ENCODE measurements at regions of chr6 and their contacts with region 1.

Region 1: GRCh38 chr6:113858480-113859348 is 1.6 kb downstream of the MARCKS start:
- DNase-seq: peak; percentile 85 to 91
- ATAC-seq: peak; percentile 84 to 98 (median 87)
- H3K4me3 ChIP-seq: peak overlapping the region; percentile 70 to 93 (median 76)
- H3K27ac ChIP-seq: peak overlapping the region; percentile 92 to 99 (median 94)
- H3K4me1 ChIP-seq: peaks cover 0 to 55% (median 34%) of the 10 kb centered on the region in 9 donors
- H3K27me3 ChIP-seq: peaks cover 0 to 9% (median 0%) of the 10 kb centered on the region in 7 donors
- CTCF ChIP-seq: peak; percentile 91 to 99 (median 98)

Region 2: DNA sequence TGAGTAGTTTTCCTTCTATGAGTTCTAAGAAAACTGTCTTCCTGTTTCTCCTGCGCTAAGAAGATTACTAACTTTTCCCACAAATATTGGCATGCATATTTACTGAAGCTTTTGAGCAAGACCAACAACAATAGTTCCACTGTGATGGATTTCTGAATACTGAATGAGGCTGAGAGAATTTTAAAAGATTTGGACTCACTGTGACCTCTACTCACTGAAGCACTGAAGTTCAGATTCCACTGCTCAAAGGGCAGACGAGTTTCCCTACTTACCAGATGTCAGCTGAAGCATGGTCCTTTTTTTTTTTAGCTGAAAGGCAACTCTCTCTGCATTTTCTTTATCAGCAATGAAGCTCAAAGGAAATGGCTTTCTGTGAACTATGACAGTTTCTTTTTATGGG is 793.1 kb before region 1 on chr6:
- intact Hi-C with region 1: loop called in 2 of 10 experiments (anchors 5 kb)
- DNase-seq: peak in 1 of 2 donors; percentile 26
- ATAC-seq: peak in 7 of 8 donors; percentile 51 to 95 (median 79)
- H3K4me3 ChIP-seq: no peak overlapping the region
- H3K27ac ChIP-seq: peak overlapping the region in 6 of 10 donors; percentile 10 to 63 (median 18)
- H3K4me1 ChIP-seq: peaks cover 0 to 32% (median 12%) of the 10 kb centered on the region in 9 donors
- H3K27me3 ChIP-seq: no peaks in the 10 kb centered on the region
- CTCF ChIP-seq: no peak

Region 3: DNA sequence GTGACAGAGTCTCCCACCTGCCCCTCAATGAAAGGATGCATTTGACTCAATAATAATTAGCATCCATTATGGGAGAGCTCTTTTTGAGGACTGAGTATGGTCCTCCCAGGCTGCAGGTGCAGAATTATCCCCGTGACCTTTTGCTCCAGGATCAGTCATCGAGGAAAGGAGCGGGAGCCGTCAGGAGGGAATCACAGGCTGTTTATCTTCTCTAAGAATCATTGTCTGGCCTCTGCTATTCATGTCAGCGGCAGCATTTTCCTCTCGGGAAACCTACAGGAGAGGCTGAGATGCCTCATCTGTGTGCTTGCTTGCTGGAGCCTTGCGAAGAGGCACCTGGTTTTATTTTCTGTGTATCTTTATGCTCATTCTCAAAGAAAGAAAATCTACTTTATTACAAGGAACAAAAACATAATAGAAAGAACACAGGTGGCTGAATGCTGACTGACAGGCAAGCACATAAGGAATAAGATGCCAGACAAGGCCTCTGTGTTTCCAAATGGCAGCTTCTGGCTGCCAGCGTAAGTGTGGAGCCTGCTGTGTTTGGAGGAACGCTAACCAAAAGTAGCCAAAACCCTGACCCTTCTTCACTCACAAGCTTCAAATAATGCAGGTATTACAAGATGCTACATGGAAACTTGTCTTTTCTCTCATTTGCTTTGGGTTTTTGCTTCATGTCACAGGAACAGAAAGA is 540.7 kb before region 1 on chr6:
- intact Hi-C with region 1: loop called in 2 of 10 experiments (anchors 10 kb)
- DNase-seq: no peak
- ATAC-seq: no peak
- H3K4me3 ChIP-seq: no peak overlapping the region
- H3K27ac ChIP-seq: no peak overlapping the region
- H3K4me1 ChIP-seq: peaks cover 0 to 12% (median 5%) of the 10 kb centered on the region in 9 donors
- H3K27me3 ChIP-seq: no peaks in the 10 kb centered on the region
- CTCF ChIP-seq: no peak

Region 4: GRCh38 chr6:113414511-113414910 is 444.2 kb before region 1 on chr6:
- intact Hi-C with region 1: loop called in 7 of 10 experiments (anchors 2 to 10 kb)
- DNase-seq: peak in 1 of 2 donors; percentile 43
- ATAC-seq: peak in 7 of 8 donors; percentile 52 to 87 (median 84)
- H3K4me3 ChIP-seq: no peak overlapping the region
- H3K27ac ChIP-seq: no peak overlapping the region
- H3K4me1 ChIP-seq: peaks cover 0 to 20% (median 6%) of the 10 kb centered on the region in 9 donors
- H3K27me3 ChIP-seq: no peaks in the 10 kb centered on the region
- CTCF ChIP-seq: peak; percentile 13 to 71 (median 55)

Region 5: DNA sequence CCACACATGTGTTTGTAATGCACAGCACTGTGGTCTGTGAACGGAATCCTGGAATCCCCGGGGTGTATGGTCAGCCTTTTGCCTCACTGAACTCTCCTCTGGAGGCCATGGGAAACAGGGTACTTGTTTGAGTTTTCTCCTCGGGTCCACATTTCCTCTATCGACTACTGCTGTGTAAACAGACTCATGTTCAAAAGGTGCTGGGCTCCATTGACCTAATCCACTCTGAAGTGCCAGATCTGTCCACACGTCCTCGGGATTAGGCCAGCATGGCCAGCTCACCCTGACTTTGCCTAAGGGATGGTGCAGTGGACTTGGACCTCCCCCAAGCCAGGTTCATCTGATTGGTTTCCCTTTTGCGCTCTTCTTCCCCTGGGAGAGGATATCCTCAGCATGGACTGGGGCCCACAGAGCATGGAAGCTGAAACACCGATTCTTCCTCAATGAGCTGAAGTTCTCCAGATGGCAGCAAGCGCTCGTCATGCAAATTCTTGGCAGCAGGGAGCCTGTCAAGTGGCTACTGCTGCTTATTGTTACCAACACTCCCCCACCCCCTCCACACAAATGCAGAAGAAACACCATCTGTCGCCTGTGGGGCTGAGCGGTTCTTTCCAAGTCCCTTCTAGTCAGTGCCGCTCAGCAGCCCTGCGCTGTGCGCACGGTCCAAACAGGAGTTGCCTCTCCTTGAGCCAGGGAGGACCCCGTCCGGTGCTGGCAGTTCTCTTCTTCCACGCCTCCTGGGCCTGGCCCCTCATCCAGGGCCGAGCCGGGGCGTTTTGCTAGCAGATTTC is 294.1 kb before region 1 on chr6:
- intact Hi-C with region 1: loop called (anchors 2 to 10 kb)
- DNase-seq: peak; percentile 80 to 93
- ATAC-seq: peak; percentile 98 to 100 (median 98)
- H3K4me3 ChIP-seq: peak overlapping the region in 9 of 10 donors; percentile 13 to 48 (median 36)
- H3K27ac ChIP-seq: peak overlapping the region; percentile 16 to 86 (median 77)
- H3K4me1 ChIP-seq: peaks cover 4 to 18% (median 14%) of the 10 kb centered on the region in 9 donors
- H3K27me3 ChIP-seq: no peaks in the 10 kb centered on the region
- CTCF ChIP-seq: peak in 7 of 9 donors; percentile 12 to 46 (median 29)

Region 6: GRCh38 chr6:113671421-113671820 is 187.3 kb before region 1 on chr6:
- intact Hi-C with region 1: loop called in 2 of 10 experiments (anchors 2 to 10 kb)
- DNase-seq: no peak
- ATAC-seq: no peak
- H3K4me3 ChIP-seq: no peak overlapping the region
- H3K27ac ChIP-seq: peak overlapping the region in 1 of 10 donors; percentile 73
- H3K4me1 ChIP-seq: peaks cover 0 to 42% (median 38%) of the 10 kb centered on the region in 9 donors
- H3K27me3 ChIP-seq: no peaks in the 10 kb centered on the region
- CTCF ChIP-seq: no peak

Region 7: DNA sequence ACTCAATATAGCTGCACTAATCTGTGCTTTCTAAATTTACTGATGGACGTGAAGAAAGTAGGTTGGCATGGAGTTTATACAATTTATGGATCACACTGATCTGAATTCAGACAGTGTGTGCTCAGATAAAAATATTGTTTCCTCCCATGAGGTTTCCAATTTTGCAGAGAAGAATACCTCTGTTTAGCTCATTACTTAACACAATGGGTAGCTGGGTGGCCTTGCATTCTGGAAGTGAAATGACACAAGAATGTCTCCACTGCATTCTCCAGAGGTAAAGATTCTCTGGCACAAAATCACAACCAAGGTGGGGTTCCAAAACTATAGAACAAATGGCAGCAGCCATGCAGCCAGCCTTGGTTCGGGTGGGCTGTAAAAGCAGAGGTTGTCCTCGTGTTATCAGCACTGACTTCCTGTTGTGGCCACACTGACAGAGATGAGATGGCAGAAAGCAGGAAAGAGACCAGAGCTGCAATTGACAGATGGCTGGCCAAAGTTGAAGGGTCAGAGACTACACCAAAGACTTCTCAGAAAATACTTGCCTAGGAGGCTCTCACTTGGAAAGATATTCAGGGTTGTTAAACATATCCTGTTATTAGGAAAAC is 62.1 kb after region 1 on chr6:
- intact Hi-C with region 1: loop called in 1 of 10 experiments (anchors 5 kb)
- DNase-seq: no peak
- ATAC-seq: peak in 7 of 8 donors; percentile 25 to 66 (median 55)
- H3K4me3 ChIP-seq: no peak overlapping the region
- H3K27ac ChIP-seq: peak overlapping the region in 9 of 10 donors; percentile 3 to 57 (median 50)
- H3K4me1 ChIP-seq: peaks cover 0 to 57% (median 22%) of the 10 kb centered on the region in 9 donors
- H3K27me3 ChIP-seq: no peaks in the 10 kb centered on the region
- CTCF ChIP-seq: no peak